ENCODE measurements at regions of chrX and their contacts with region 1.

Region 1: DNA sequence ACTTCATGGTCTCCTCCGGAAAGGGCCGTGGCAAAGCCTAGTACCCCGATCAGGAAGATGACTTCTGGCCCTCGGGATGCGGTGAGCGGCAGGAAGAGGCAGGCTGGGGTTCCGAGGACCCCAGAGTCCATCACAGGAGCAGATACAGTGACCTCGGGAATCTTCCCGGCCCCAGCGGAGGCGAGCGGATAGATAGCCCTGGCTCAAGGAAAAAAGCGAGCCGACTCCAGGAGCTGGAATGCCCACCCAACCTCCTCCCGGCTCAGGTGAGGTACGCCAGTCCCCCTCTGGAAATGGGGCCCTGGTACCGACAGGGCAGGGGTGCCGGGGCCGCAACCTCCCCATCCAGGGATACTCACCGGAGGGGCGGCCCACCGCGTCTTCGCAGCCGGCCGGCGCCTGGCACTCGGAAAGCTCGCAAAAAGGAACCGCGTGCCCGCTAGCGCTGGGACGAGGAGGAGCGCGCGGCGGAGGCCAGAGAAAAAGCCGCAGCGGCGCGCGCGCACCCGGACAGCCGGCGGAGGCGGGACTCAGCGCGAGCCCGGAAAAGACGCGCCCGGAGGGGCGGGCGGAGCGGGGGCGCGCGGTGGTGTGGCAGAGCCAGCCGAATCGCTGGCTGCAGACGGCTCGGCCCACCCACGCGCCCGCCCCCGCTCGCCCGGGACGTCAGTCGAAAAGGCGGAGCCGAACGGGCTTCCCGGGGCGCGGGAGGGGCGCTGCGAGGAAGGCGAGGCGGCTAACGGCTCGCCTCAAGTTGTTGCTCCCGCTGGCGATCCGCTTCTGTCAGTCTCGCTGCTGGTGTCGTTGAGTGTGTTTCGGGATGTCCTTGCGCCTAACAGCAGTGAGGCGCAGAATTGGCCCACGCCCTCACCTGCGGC is at the start of gene ACSL4:
- DNase-seq: peak; percentile 81
- H3K4me3 Mint-ChIP-seq: peak within 1 kb of the TSS; percentile 93
- H3K27ac Mint-ChIP-seq: peak within 1 kb of the TSS; percentile 95
- H3K4me1 Mint-ChIP-seq: peaks cover 32% of the 10 kb centered on the region
- H3K27me3 Mint-ChIP-seq: peaks cover 2% of the 10 kb centered on the region
- total RNA-seq, gene ACSL4: 76.0 and 77.3 TPM in 2 replicates

Region 2: DNA sequence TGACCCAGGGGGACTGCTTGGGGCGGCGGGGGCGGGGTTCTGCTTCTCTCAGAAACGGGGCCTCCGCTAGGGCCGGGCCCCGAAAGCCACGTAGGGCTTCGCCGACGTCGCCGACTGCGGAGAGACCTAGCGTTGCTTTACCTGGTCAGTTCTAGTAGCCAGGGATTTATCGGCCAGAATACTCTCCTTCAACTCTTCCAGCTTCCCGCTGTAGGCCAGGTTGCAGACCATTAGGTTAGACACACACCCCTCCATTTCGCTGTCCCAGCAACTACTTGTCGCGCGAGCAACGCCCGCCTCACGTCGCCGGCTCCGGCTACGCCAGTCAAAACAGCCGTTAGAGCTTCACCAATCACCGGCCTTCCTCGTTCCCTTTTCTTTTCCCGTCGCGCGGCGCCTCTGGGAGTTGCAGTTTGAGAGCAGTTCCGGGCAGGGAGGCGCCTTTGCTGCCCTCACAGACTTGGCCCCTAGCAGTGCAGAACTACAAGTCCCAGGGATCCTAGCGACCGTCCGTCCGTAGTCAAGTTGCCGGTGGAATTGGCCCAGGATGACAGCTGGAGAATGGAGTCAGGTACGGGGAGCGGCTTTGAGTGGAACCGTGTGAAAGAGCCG is 1641.6 kb before region 1 on chrX and contains the starts of genes ATG4A and PSMD10:
- intact Hi-C with region 1: loop called (anchors 5 kb)
- DNase-seq: peak; percentile 85
- H3K4me3 Mint-ChIP-seq: no peak within 1 kb of the TSS
- H3K27ac Mint-ChIP-seq: no peak within 1 kb of the TSS
- H3K4me1 Mint-ChIP-seq: peaks cover 17% of the 10 kb centered on the region
- H3K27me3 Mint-ChIP-seq: no peaks in the 10 kb centered on the region
- total RNA-seq, gene ATG4A: 9.6 and 9.8 TPM in 2 replicates
- total RNA-seq, gene PSMD10: 42.5 and 44.1 TPM in 2 replicates

Region 3: GRCh38 chrX:109782994-109783700 is 50.1 kb after region 1 on chrX:
- intact Hi-C with region 1: loop called (anchors 1 kb)
- DNase-seq: no peak
- H3K4me3 Mint-ChIP-seq: peak overlapping the region; percentile 76
- H3K27ac Mint-ChIP-seq: peak overlapping the region; percentile 92
- H3K4me1 Mint-ChIP-seq: peaks cover 17% of the 10 kb centered on the region
- H3K27me3 Mint-ChIP-seq: no peaks in the 10 kb centered on the region

Region 4: DNA sequence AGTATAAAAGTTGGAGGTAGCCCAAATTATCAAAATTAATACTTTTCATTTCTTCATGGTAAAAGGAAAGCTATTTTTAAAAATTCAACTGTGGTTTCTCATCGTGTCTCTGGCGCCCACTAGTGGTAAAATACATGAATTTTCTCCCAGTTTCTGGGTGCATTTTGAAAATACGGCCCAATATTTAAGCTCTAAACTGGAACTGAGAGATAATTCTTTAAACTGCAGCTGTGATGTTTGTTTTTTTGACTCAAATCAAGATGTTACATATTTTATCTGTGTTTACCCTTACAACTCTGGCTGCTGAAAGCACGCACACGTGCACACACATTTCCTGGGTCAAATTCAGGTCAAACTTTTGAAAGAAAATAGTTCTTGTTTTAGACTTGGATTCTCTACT is 124.0 kb after region 1 on chrX:
- intact Hi-C with region 1: loop called (anchors 5 kb)
- DNase-seq: no peak
- H3K4me3 Mint-ChIP-seq: no peak overlapping the region
- H3K27ac Mint-ChIP-seq: no peak overlapping the region
- H3K4me1 Mint-ChIP-seq: peaks cover 5% of the 10 kb centered on the region
- H3K27me3 Mint-ChIP-seq: peaks cover 4% of the 10 kb centered on the region

Region 5: GRCh38 chrX:110310896-110311295 is 577.9 kb after region 1 on chrX:
- intact Hi-C with region 1: loop called (anchors 2 kb)
- DNase-seq: peak; percentile 24
- H3K4me3 Mint-ChIP-seq: peak overlapping the region; percentile 68
- H3K27ac Mint-ChIP-seq: peak overlapping the region; percentile 82
- H3K4me1 Mint-ChIP-seq: peaks cover 51% of the 10 kb centered on the region
- H3K27me3 Mint-ChIP-seq: no peaks in the 10 kb centered on the region